Panc1 (cell line): ENCODE measurements at regions of chr3 and their contacts with region 1.

Region 1: DNA sequence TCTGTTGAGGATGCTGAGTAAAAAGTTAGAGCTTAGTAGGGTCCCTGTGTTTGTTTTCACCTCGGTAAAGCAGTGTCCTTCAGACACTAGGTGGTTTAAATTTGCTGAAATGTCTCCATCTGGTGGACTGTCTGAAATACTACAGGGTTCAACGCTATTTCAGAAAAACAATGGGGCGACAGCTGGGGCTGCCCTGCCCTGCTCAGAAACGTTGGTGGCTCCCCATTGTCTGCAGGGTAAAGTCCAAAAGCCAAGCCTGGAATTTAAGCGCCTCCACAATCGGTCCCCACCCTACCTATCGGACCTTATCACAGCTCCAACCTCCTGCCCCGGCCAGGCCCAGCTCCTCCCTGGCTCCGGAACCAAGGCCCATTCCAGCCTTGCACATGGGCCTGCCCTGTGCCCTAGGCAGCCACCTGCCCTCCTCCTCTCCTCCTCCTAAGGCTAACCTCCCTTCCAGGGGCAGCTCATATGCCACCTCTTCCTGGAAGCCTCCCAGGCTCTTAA is 4.3 kb upstream of the TSEN2 start:
- DNase-seq: no peak
- ATAC-seq: peak; percentile 65
- H3K4me3 ChIP-seq: no peak overlapping the region
- H3K27ac ChIP-seq: peak overlapping the region; percentile 92
- H3K4me1 ChIP-seq: peaks cover 30% of the 10 kb centered on the region
- H3K27me3 ChIP-seq: no peaks in the 10 kb centered on the region
- CTCF ChIP-seq: peak; percentile 71

Region 2: DNA sequence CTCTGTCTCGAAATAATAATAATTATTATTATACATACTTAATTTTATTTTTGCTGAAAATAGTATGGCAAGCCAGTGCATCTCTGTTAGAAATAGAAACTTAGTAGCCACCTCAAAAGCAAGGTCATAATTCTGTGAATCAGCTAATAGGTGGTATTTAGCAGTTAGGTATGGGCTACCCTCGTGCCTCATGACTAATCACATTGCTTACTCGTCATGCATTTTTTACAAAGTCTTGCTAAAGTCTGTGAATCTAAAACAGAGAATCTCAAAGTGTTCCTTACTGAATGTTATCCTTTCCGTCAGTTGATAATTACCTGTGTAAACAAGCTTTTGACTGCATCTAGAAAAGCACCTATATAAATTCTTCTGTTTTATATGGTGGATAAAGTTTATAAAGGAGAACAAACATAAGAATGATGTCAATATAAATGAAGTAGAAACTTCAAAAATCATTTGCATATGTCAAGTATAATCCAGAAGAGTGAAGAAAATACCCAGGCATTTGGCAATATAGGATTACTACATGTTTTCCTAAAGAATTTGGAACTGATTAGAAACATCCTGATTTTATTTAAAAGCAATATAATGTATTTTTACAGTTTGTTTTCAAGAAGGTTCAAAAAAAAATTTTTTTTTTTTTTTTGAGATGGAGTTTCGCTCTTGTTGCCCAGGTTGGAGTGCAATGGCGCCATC is 184.9 kb before region 1 on chr3:
- CTCF ChIA-PET with region 1: interaction called, 3 read pairs
- POLR2A ChIA-PET with region 1: interaction called, 3 read pairs
- in situ Hi-C with region 1: no loop called
- intact Hi-C with region 1: loop called (anchors 10 kb)
- DNase-seq: no peak
- ATAC-seq: no peak
- H3K4me3 ChIP-seq: peak overlapping the region; percentile 64 to 70; a peak in 3 of 4 replicates
- H3K27ac ChIP-seq: peak overlapping the region; percentile 93
- H3K4me1 ChIP-seq: peaks cover 40% of the 10 kb centered on the region
- H3K27me3 ChIP-seq: no peaks in the 10 kb centered on the region
- CTCF ChIP-seq: no peak

Region 3: DNA sequence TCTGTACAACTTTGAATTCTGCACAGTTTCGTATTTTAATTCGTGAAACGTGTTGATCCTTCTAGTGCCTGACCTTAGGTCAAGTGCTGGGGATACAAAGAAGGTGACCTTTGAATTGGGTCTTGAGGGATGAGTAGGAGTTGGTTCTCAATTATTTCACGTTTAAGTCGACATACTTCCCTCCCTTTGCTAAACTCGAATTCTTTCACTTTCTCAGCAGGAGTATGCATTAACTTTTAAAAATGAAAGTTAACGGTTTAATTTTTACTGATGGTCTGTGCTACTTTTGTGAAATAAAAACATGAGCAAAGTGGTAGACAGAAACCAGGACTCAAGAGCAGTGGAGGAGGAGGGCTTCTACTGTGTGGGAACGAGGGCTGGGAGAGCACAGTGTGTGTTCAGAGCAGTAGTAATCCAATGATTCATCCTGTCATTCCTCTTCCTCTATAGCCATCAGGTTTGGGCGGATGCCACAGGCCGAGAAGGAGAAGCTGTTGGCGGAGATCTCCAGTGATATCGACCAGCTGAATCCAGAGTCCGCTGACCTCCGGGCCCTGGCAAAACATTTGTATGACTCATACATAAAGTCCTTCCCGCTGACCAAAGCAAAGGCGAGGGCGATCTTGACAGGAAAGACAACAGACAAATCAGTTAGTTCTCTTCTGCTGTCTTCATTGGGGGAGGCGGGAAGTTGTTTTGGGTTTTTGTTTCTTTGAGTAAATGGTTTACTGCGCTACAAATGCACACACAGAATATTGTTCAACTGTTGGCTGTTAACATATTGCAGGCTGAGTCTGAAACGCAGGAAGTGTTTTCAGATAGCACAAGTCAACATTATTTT is 74.3 kb before region 1 on chr3:
- CTCF ChIA-PET with region 1: no interaction called
- POLR2A ChIA-PET with region 1: no interaction called
- in situ Hi-C with region 1: no loop called
- intact Hi-C with region 1: loop called (anchors 10 kb)
- DNase-seq: peak; percentile 90
- ATAC-seq: peak; percentile 97
- H3K4me3 ChIP-seq: peak overlapping the region; percentile 3 to 10; a peak in 1 of 4 replicates
- H3K27ac ChIP-seq: peak overlapping the region; percentile 94
- H3K4me1 ChIP-seq: peaks cover 41% of the 10 kb centered on the region
- H3K27me3 ChIP-seq: no peaks in the 10 kb centered on the region
- CTCF ChIP-seq: no peak

Region 4: GRCh38 chr3:12444582-12445468 is 35.1 kb before region 1 on chr3:
- CTCF ChIA-PET with region 1: interaction called, 7 read pairs
- POLR2A ChIA-PET with region 1: no interaction called
- in situ Hi-C with region 1: no loop called
- intact Hi-C with region 1: loop called (anchors 2 kb)
- DNase-seq: peak; percentile 12
- ATAC-seq: peak; percentile 91
- H3K4me3 ChIP-seq: 0 out of 4 replicates have a peak overlapping the region, but pooled peaks of 1 of the 2 experiments have one; percentile 8
- H3K27ac ChIP-seq: peak overlapping the region; percentile 98
- H3K4me1 ChIP-seq: peaks cover 29% of the 10 kb centered on the region
- H3K27me3 ChIP-seq: no peaks in the 10 kb centered on the region
- CTCF ChIP-seq: no peak

Region 5: DNA sequence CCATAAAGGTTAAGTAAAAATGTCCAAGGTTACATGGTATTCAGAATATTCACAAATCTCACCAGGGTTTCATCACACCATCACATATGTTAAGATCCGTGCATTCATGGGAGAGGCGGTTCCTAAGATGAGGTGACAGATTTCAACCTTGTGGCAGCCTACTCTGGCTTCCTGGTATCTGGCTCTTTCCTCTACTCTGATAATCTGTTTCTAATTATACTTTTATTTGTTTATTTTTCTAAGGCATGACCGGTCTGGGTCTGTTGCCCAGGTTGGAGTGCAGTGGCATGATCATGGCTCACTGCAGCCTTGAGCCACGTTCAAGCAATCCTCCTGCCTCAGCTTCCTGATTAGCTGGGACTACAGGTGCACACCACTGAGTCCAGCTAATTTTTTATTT is 149.6 kb after region 1 on chr3:
- CTCF ChIA-PET with region 1: no interaction called
- POLR2A ChIA-PET with region 1: no interaction called
- in situ Hi-C with region 1: no loop called
- intact Hi-C with region 1: no loop called
- DNase-seq: no peak
- ATAC-seq: peak; percentile 51; the same call in 1 of the 2 replicates
- H3K4me3 ChIP-seq: no peak overlapping the region
- H3K27ac ChIP-seq: no peak overlapping the region
- H3K4me1 ChIP-seq: peaks cover 19% of the 10 kb centered on the region
- H3K27me3 ChIP-seq: no peaks in the 10 kb centered on the region
- CTCF ChIP-seq: no peak